Activated CD8-positive, alpha-beta memory T cell treated with anti-CD3 and anti-CD28 coated beads, Interleukin-2, amount 10 ng/mL, durations not matched to agents 7 days and 5 days (primary cell): ENCODE measurements at regions of chr1 and their contacts with region 1.

Region 1: DNA sequence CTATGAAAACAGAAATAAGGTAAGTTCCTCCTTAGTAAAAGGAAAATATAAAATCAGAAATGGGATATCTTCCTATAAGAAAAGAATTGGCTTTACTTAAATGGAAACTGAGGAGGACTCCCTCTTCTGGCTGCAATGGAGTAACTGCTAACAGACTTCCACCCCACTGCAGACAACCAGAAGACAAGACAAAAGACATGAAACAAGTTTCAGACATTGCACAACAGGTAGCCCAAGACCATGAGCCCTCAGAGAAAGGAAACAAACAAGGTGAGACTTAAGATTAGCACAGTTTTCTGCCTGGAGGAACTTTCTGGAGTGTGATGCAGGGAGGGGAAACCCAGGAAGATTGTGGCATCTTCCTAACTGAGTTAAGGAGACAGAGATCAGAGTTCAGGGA is 17.0 kb upstream of the OLFML2B start:
- DNase-seq: no peak
- ATAC-seq: no peak
- H3K4me3 Mint-ChIP-seq: no peak overlapping the region
- H3K27ac Mint-ChIP-seq: no peak overlapping the region
- H3K4me1 Mint-ChIP-seq: peaks cover 2% of the 10 kb centered on the region
- H3K27me3 Mint-ChIP-seq: peaks cover 33% of the 10 kb centered on the region

Region 2: GRCh38 chr1:161763522-161764098 is 277.1 kb before region 1 on chr1:
- CTCF ChIA-PET with region 1: interaction called, 10 read pairs
- DNase-seq: peak; percentile 63
- ATAC-seq: peak; percentile 57
- H3K4me3 Mint-ChIP-seq: peak overlapping the region; percentile 57
- H3K27ac Mint-ChIP-seq: peak overlapping the region; percentile 58
- H3K4me1 Mint-ChIP-seq: peaks cover 43% of the 10 kb centered on the region
- H3K27me3 Mint-ChIP-seq: no peaks in the 10 kb centered on the region

Region 3: GRCh38 chr1:161820914-161821313 is 219.8 kb before region 1 on chr1:
- CTCF ChIA-PET with region 1: no interaction called
- DNase-seq: no peak
- ATAC-seq: no peak
- H3K4me3 Mint-ChIP-seq: no peak overlapping the region
- H3K27ac Mint-ChIP-seq: no peak overlapping the region
- H3K4me1 Mint-ChIP-seq: no peaks in the 10 kb centered on the region
- H3K27me3 Mint-ChIP-seq: no peaks in the 10 kb centered on the region